ENCODE measurements at regions of chr7 and their contacts with region 1.

Region 1: GRCh38 chr7:107450970-107451369 is 18.9 kb upstream of the GPR22 start:
- DNase-seq: no peak

Region 2: DNA sequence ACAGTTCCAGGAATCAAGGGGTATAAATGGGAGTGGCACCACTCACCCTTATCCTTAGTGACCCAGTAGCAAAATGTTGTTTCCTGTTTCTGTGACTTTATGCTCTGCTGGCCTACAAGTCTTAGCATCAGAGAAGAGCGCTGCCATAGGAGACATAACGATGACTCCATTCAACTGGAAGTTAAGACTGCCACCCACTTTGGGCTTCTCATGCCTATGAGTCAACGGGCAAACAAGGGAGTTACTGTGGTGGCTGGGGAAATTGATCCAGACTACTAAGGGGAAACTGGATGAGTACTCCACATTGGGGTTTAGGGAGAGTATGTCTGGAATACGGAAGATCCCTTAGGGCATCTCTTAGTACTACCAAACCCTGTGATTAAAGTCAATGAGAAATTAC is 626.5 kb before region 1 on chr7:
- intact Hi-C with region 1: no loop called
- DNase-seq: no peak

Region 3: GRCh38 chr7:107372298-107372697 is 78.7 kb before region 1 on chr7:
- intact Hi-C with region 1: loop called (anchors 10 kb)
- DNase-seq: no peak

Region 4: GRCh38 chr7:107972075-107972482 is 521.1 kb after region 1 on chr7:
- intact Hi-C with region 1: no loop called
- DNase-seq: no peak

Measured in cardiac septum (tissue), 1 donor.